T-cell (primary cell): ENCODE measurements at regions of chr1 and their contacts with region 1.

Region 1: GRCh38 chr1:99886841-99887240 is 36.7 kb downstream of the AGL start:
- DNase-seq: no peak
- ATAC-seq: no peak
- H3K4me3 ChIP-seq: no peak overlapping the region
- H3K4me3 Mint-ChIP-seq: no peak overlapping the region
- H3K27ac ChIP-seq: no peak overlapping the region
- H3K27ac Mint-ChIP-seq: no peak overlapping the region
- H3K4me1 ChIP-seq: no peaks in the 10 kb centered on the region
- H3K4me1 Mint-ChIP-seq: no peaks in the 10 kb centered on the region
- H3K27me3 ChIP-seq: no peaks in the 10 kb centered on the region
- H3K27me3 Mint-ChIP-seq: no peaks in the 10 kb centered on the region

Region 2: GRCh38 chr1:101781201-101781831 is 1894.5 kb after region 1 on chr1:
- CTCF ChIA-PET with region 1: no interaction called
- POLR2A ChIA-PET with region 1: interaction called in 1 of 2 experiments, 11 read pairs
- DNase-seq: no peak
- ATAC-seq: no peak
- H3K4me3 ChIP-seq: no peak overlapping the region
- H3K4me3 Mint-ChIP-seq: no peak overlapping the region
- H3K27ac ChIP-seq: no peak overlapping the region
- H3K27ac Mint-ChIP-seq: no peak overlapping the region
- H3K4me1 ChIP-seq: no peaks in the 10 kb centered on the region
- H3K4me1 Mint-ChIP-seq: no peaks in the 10 kb centered on the region
- H3K27me3 ChIP-seq: no peaks in the 10 kb centered on the region
- H3K27me3 Mint-ChIP-seq: peaks cover 3 to 7% of the 10 kb centered on the region in 2 donors